ENCODE measurements at regions of chr11 and their contacts with region 1.

Region 1: GRCh38 chr11:64688534-64688982 is 34.4 kb downstream of the NRXN2 start:
- DNase-seq: peak; percentile 81 to 92
- ATAC-seq: peak; percentile 91 to 95
- H3K4me3 ChIP-seq: peak overlapping the region; percentile 46 to 72 (median 50)
- H3K27ac ChIP-seq: peak overlapping the region; percentile 80 to 88 (median 81)
- H3K4me1 ChIP-seq: peaks cover 22 to 28% of the 10 kb centered on the region in 2 donors
- H3K27me3 ChIP-seq: no peaks in the 10 kb centered on the region
- CTCF ChIP-seq: peak; percentile 91 to 97 (median 95)
- POLR2A ChIP-seq: no peak

Region 2: DNA sequence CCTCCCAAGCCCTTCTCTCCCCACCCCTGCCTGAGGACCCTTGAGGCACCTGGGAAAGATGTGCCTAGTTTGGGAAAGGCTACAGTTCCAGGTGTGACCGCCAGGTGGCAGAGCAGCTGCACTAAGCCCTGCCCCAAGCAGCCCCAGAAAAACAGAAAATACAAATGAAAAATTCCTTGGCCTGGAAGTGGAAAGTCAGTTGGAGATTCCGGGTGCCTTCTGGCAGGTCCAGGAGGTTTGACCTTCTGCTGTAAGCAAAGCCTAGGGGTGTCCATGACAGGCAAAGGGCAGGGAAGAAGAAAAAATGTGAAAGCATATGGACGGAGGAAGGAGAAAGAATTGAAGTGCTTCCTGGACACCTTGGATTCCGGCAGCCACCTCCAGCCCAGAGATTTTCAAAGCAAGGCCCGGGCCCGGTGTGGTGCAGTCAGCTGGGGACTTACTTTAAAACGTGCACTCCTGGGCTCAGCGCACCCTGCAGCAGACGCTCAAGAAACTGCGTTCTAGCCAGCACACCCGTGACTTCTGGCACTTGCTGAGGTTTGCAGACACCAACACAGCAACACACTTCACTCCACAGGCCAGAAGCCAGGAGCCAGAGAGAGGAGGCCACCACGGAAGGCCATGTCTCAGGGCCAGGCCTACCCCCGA is 134.9 kb before region 1 on chr11:
- in situ Hi-C with region 1: no loop called
- intact Hi-C with region 1: loop called (anchors 1 kb)
- DNase-seq: peak in 1 of 2 donors; percentile 40
- ATAC-seq: peak; percentile 53 to 69
- H3K4me3 ChIP-seq: no peak overlapping the region
- H3K27ac ChIP-seq: peak overlapping the region in 1 of 4 donors; percentile 31
- H3K4me1 ChIP-seq: peaks cover 8 to 11% of the 10 kb centered on the region in 2 donors
- H3K27me3 ChIP-seq: peaks cover 0 to 2% (median 0%) of the 10 kb centered on the region in 3 donors
- CTCF ChIP-seq: peak; percentile 86 to 98 (median 95)
- POLR2A ChIP-seq: no peak

Region 3: GRCh38 chr11:64652586-64653387 is 35.8 kb before region 1 on chr11:
- in situ Hi-C with region 1: no loop called
- intact Hi-C with region 1: loop called (anchors 2 kb)
- DNase-seq: peak; percentile 39 to 59
- ATAC-seq: peak; percentile 51 to 90
- H3K4me3 ChIP-seq: no peak overlapping the region
- H3K27ac ChIP-seq: no peak overlapping the region
- H3K4me1 ChIP-seq: peaks cover 0 to 3% of the 10 kb centered on the region in 2 donors
- H3K27me3 ChIP-seq: no peaks in the 10 kb centered on the region
- CTCF ChIP-seq: peak; percentile 62 to 88 (median 84)
- POLR2A ChIP-seq: no peak

Region 4: DNA sequence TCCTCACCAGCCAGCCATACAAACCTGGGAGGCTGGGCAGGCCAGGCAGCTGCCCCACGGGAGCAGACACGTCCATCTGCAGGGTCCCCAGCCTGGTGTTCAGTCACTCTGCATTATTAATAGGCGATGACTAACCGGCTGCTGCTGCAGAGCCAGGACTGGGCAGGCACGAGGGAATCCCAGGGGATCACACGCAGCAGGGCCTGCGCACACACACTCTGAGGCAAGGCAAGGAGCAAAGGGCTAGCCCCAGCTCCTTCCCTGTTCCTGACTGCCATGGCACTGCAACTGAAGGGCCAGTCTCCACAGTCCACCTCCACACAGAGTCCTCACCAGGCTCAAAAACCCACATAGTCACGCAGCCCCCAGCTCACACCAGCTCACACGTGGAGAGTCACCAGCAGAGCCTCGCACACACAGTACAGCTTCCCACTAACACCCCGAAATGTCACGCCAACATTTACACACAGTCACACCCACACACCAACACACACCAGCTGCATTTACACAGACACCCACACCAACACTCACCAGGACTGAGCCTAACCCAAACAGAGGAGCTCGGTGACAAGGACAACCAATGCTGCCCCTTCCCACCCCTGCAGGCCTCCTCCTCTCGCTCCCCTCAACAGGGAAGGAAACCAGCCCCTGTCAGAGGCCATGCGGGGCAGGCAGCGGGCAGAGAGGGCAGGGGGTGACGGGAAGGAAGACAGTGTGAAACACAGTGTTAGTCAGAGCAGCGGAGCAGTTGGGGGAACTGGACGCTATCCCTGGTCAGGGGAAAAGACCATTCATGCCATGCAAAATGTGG is 12.9 kb before region 1 on chr11:
- in situ Hi-C with region 1: no loop called
- intact Hi-C with region 1: loop called (anchors 1 kb)
- DNase-seq: peak; percentile 94 to 96
- ATAC-seq: peak; percentile 96 to 97
- H3K4me3 ChIP-seq: no peak overlapping the region
- H3K27ac ChIP-seq: peak overlapping the region; percentile 75 to 84 (median 81)
- H3K4me1 ChIP-seq: peaks cover 15 to 21% of the 10 kb centered on the region in 2 donors
- H3K27me3 ChIP-seq: peaks cover 0 to 3% (median 0%) of the 10 kb centered on the region in 3 donors
- CTCF ChIP-seq: no peak
- POLR2A ChIP-seq: peak in 1 of 2 donors; percentile 15

Region 5: DNA sequence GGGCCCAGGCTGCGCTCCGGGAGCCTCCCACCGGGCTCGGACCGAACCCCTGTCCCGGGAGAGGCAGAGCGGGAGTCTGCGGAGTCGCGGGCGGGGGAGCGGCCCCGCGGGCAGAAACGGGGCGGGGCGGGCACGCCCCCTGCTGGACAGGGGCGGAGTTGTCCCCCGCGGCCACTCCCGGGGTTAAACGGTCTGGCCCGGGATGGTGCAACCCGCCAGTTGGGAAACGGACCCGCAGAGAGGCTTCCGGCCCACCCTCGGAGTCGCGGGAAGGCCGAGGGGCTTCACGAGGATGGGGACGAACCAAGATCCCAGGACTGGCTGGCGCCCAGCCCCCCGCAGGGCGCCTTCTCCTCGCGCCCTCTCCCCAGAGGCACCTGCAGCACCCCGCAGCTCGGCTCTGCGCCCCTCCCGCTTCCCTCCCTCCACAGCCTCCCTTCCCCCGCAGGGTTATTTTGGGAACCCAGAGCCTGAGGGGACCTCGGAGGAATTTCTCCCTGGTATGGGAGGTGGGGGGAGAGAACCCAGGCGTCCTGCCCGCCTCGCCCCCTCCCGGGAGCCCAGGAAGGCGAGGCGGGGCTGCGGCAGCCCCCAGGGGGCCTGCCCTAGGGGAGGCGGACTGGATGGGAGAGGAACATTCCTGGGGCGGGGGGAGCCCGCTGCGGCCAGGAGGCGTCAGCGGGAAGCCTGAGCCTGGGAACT is 54.5 kb after region 1 on chr11:
- in situ Hi-C with region 1: no loop called
- intact Hi-C with region 1: loop called (anchors 1 kb)
- DNase-seq: peak; percentile 48 to 84
- ATAC-seq: peak; percentile 55 to 61
- H3K4me3 ChIP-seq: peak overlapping the region; percentile 59 to 88 (median 76)
- H3K27ac ChIP-seq: peak overlapping the region; percentile 86 to 99 (median 93)
- H3K4me1 ChIP-seq: peaks cover 16 to 32% of the 10 kb centered on the region in 2 donors
- H3K27me3 ChIP-seq: no peaks in the 10 kb centered on the region
- CTCF ChIP-seq: peak; percentile 76 to 96 (median 95)
- POLR2A ChIP-seq: peak; percentile 37 to 68